ENCODE measurements at regions of chr7 and their contacts with region 1.

Region 1: DNA sequence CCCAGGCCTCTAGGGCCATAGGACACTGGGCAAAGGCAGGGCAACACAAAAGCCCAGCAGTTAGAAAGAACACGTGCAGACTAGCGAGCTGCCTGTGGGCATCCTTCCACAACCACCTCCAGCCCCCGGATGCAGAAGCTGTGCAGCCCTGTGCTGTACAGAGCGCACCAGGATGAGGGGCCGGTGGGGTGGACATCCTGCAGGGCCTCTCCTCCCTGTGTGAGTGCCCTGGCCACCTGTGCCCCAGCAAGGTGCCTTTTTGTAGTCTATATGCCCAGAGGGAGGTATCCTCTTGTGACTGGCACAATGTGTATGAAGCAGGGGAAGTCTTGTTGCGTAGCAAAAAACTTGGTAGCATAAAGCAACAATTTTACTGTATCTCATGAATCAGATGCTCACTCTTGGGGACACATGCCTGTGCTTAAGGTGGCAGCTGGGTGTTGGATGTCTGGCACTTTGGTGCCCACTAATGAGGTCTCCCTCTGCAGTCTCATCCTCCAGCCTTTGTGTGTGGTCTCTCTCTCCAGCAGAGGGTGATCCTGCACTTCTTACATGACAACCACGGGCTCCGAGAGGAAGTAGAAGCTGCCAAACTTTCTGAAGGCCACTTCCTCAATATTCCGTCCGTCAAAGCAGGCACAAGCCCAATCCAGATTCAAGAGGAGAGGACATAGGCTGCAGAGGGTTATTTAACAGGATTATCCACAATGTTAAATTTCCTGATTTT is 8.7 kb downstream of the NCAPG2 start:
- DNase-seq: peak; percentile 77
- ATAC-seq: peak; percentile 92
- H3K4me3 ChIP-seq: no peak overlapping the region
- H3K27ac ChIP-seq: no peak overlapping the region
- H3K4me1 ChIP-seq: peaks cover 4% of the 10 kb centered on the region; the same call in 1 of the 2 replicates
- H3K27me3 ChIP-seq: no peaks in the 10 kb centered on the region
- CTCF ChIP-seq: peak; percentile 76
- POLR2A ChIP-seq: 0 out of 2 replicates have a peak, but pooled peaks have one; percentile 28
- RAD21 ChIP-seq: peak; percentile 85

Region 2: DNA sequence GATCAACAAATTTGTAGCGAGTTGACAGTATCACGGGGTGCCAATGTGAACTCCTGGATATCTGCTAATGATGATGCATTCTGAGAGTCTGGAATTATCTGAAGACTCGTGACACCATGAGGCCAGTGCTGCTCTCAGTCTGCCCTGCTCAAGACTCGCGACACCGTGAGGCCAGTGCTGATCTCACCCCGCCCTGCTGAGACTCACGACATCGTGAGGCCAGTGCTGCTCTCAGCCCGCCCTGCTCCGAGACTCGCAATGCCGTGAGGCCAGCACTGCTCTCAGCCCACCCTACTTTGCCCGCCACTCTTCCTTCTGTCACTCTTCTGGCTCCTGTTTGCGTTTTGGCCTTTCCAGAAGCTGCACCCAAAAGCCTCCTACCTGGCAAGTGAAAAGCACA is 520.1 kb before region 1 on chr7:
- CTCF ChIA-PET with region 1: no interaction called
- POLR2A ChIA-PET with region 1: no interaction called
- dilution Hi-C with region 1: no loop called
- in situ Hi-C with region 1: no loop called
- intact Hi-C with region 1: no loop called
- DNase-seq: no peak
- ATAC-seq: no peak
- H3K4me3 ChIP-seq: no peak overlapping the region
- H3K27ac ChIP-seq: no peak overlapping the region
- H3K4me1 ChIP-seq: no peaks in the 10 kb centered on the region
- H3K27me3 ChIP-seq: no peaks in the 10 kb centered on the region
- CTCF ChIP-seq: no peak
- POLR2A ChIP-seq: no peak
- RAD21 ChIP-seq: no peak

Region 3: GRCh38 chr7:158587162-158588084 is 108.5 kb before region 1 on chr7 and contains the start of gene PTPRN2:
- CTCF ChIA-PET with region 1: no interaction called
- POLR2A ChIA-PET with region 1: no interaction called
- dilution Hi-C with region 1: no loop called
- in situ Hi-C with region 1: no loop called
- intact Hi-C with region 1: no loop called
- DNase-seq: peak; percentile 42
- ATAC-seq: peak; percentile 98
- H3K4me3 ChIP-seq: peak within 1 kb of the TSS; percentile 45
- H3K27ac ChIP-seq: no peak within 1 kb of the TSS
- H3K4me1 ChIP-seq: no peaks in the 10 kb centered on the region; the same call in 1 of the 2 replicates
- H3K27me3 ChIP-seq: peaks cover 34% of the 10 kb centered on the region
- CTCF ChIP-seq: no peak
- POLR2A ChIP-seq: no peak
- RAD21 ChIP-seq: no peak
- total RNA-seq, gene PTPRN2: under 0.01 TPM in 1 of 2 replicates, not detected in the other

Region 4: DNA sequence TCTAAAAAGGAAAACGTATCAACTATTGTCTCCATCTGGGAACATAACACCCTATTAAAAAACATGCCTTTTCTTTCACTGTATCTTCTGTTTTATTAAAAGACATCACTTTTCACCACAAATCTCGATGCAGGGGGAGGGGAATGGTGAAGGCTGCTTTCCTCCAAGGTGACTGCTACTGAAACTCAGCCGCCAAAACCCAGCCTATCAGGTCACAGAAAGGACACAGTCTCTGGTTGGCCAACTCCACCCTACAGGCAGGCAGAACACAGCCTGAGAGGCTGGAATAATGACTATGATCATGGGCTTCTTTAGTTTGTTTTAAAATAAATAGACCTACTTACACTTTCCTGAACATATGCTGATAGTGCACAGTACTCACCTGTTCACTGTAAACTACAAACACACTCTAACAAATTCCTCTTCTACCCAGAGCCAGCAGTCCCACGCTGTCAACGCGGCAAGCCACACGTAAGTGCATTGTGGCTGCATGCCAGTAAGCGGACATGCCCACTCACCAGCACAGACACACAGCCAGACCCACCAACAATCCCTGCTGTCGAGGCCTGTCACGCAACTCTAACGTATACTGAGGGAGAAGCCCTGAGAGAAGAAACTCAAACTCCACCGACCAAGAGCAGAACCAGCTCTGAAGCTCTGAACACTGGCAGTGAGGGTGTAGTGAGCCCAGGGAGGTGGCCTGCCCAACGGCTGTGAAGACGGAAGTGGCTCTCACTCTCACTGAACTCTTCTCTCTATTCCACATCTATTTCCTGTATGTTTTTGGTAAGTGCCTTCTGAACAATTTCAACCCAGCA is 33.1 kb before region 1 on chr7:
- CTCF ChIA-PET with region 1: no interaction called
- POLR2A ChIA-PET with region 1: no interaction called
- dilution Hi-C with region 1: no loop called
- in situ Hi-C with region 1: no loop called
- intact Hi-C with region 1: no loop called
- DNase-seq: no peak
- ATAC-seq: no peak
- H3K4me3 ChIP-seq: no peak overlapping the region
- H3K27ac ChIP-seq: no peak overlapping the region; the same call in 1 of the 2 replicates
- H3K4me1 ChIP-seq: no peaks in the 10 kb centered on the region
- H3K27me3 ChIP-seq: no peaks in the 10 kb centered on the region
- CTCF ChIP-seq: no peak
- POLR2A ChIP-seq: no peak
- RAD21 ChIP-seq: no peak

Region 5: GRCh38 chr7:158976849-158977593 is 281.1 kb after region 1 on chr7:
- CTCF ChIA-PET with region 1: interaction called, 32 read pairs
- POLR2A ChIA-PET with region 1: no interaction called
- dilution Hi-C with region 1: no loop called
- in situ Hi-C with region 1: loop called (anchors 5 kb)
- intact Hi-C with region 1: loop called (anchors 1 kb)
- DNase-seq: peak; percentile 51
- ATAC-seq: peak; percentile 94
- H3K4me3 ChIP-seq: peak overlapping the region; percentile 4; the same call in 1 of the 2 replicates
- H3K27ac ChIP-seq: no peak overlapping the region
- H3K4me1 ChIP-seq: no peaks in the 10 kb centered on the region
- H3K27me3 ChIP-seq: no peaks in the 10 kb centered on the region
- CTCF ChIP-seq: peak; percentile 76
- POLR2A ChIP-seq: no peak
- RAD21 ChIP-seq: peak; percentile 69

Region 6: GRCh38 chr7:159240962-159241361 is 545.1 kb after region 1 on chr7:
- CTCF ChIA-PET with region 1: no interaction called
- POLR2A ChIA-PET with region 1: no interaction called
- dilution Hi-C with region 1: no loop called
- in situ Hi-C with region 1: no loop called
- intact Hi-C with region 1: no loop called
- DNase-seq: no peak
- ATAC-seq: no peak
- H3K4me3 ChIP-seq: no peak overlapping the region
- H3K27ac ChIP-seq: no peak overlapping the region
- H3K4me1 ChIP-seq: no peaks in the 10 kb centered on the region
- H3K27me3 ChIP-seq: no peaks in the 10 kb centered on the region
- CTCF ChIP-seq: no peak
- POLR2A ChIP-seq: no peak
- RAD21 ChIP-seq: no peak

Measured in IMR-90 (cell line).